Activated CD4-positive, alpha-beta memory T cell treated with anti-CD3 and anti-CD28 coated beads for 36 hours (primary cell): ENCODE measurements at regions of chr18 and their contacts with region 1.

Region 1: GRCh38 chr18:62131301-62131909 is 55.5 kb downstream of the PIGN start:
- DNase-seq: peak; percentile 67
- H3K4me3 Mint-ChIP-seq: no peak overlapping the region
- H3K27ac Mint-ChIP-seq: no peak overlapping the region
- H3K4me1 Mint-ChIP-seq: peaks cover 4% of the 10 kb centered on the region
- H3K27me3 Mint-ChIP-seq: no peaks in the 10 kb centered on the region

Region 2: DNA sequence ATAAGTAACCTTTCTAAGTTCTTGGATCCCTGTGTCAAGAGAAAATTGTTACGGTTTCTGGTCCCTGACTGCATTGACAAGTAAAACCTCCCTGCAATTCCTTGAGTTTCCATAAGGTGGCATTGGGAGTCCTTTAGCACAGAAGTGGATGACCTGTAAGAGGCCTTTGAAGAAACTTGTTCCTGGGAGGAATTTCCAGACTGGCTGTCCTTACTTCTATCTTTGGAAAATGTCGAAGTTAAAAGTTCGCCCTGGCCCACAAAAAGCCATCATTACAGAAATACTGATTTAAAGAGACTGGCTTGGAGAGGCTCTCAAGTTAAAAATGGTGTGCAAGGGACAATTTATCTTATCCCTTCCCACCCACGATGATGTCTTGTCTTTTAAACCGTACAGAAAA is 579.8 kb before region 1 on chr18:
- CTCF ChIA-PET with region 1: interaction called, 15 read pairs
- POLR2A ChIA-PET with region 1: no interaction called
- intact Hi-C with region 1: loop called (anchors 1 kb)
- DNase-seq: no peak
- H3K4me3 Mint-ChIP-seq: no peak overlapping the region
- H3K27ac Mint-ChIP-seq: no peak overlapping the region
- H3K4me1 Mint-ChIP-seq: peaks cover 9% of the 10 kb centered on the region
- H3K27me3 Mint-ChIP-seq: peaks cover 9% of the 10 kb centered on the region

Region 3: GRCh38 chr18:61581578-61582201 is 549.7 kb before region 1 on chr18:
- CTCF ChIA-PET with region 1: interaction called, 63 read pairs
- POLR2A ChIA-PET with region 1: no interaction called
- intact Hi-C with region 1: loop called (anchors 1 kb)
- DNase-seq: peak; percentile 75
- H3K4me3 Mint-ChIP-seq: no peak overlapping the region
- H3K27ac Mint-ChIP-seq: no peak overlapping the region
- H3K4me1 Mint-ChIP-seq: peaks cover 6% of the 10 kb centered on the region
- H3K27me3 Mint-ChIP-seq: peaks cover 27% of the 10 kb centered on the region

Region 4: DNA sequence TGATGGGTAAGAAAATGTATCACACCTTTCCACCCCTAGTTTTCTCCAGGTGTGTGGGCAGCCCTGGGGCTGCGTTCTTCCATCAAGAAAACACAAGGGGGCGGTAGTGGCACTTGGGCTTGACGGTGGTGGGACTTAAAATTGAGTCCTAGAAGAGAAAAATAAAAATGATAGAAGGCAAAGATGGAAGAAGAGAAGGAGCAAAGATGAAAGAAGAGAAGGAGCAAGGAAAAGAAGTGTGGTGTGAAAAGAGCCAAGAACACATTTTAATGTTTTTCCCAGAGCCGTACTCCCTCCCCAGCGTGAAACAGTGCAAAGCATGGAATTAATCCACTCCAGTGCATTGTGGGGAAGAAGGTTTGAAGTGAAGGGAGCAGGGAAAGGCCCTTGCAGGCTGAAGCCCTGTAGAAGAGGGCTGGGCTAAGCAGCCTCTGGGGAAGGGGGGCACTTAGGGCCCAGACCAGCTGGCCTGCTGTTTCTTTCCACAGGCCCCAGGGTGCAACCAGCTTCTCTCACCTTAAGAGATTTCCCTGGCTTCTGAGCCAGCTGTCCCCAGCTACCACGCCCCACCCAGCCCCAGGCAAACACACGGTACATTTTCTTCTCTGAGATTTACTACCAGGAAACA is 495.4 kb before region 1 on chr18:
- CTCF ChIA-PET with region 1: interaction called, 81 read pairs
- POLR2A ChIA-PET with region 1: no interaction called
- intact Hi-C with region 1: loop called (anchors 1 kb)
- DNase-seq: peak; percentile 54
- H3K4me3 Mint-ChIP-seq: no peak overlapping the region
- H3K27ac Mint-ChIP-seq: no peak overlapping the region
- H3K4me1 Mint-ChIP-seq: no peaks in the 10 kb centered on the region
- H3K27me3 Mint-ChIP-seq: peaks cover 2% of the 10 kb centered on the region

Region 5: DNA sequence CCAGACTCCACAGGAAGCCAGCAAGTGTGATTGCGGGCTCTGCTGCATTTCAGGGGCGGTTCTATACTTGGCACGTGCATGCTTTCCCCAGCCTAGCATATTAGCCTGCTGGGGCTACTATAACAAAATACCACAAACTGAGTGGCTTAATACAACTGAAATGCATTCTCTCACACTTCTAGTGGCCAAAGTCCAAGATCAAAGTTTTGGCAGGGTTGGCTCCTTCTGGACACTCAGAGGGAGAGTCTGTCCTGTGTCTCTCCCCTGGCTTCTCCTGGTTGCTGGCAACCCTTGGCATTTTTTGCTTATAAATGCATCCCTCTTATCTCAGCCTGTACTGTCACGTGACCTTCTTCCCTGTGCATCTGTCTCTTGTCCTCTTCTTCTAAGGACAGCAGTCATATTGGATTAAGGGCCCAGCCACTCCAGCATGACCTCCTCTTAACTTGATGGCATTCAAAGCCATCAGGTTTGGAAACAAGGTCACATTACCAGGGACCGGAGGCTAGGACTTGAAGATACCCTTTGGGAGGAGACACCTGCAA is 377.3 kb before region 1 on chr18:
- CTCF ChIA-PET with region 1: interaction called, 4 read pairs
- POLR2A ChIA-PET with region 1: no interaction called
- intact Hi-C with region 1: loop called (anchors 5 kb)
- DNase-seq: no peak
- H3K4me3 Mint-ChIP-seq: no peak overlapping the region
- H3K27ac Mint-ChIP-seq: no peak overlapping the region
- H3K4me1 Mint-ChIP-seq: peaks cover 3% of the 10 kb centered on the region
- H3K27me3 Mint-ChIP-seq: peaks cover 3% of the 10 kb centered on the region

Region 6: GRCh38 chr18:61901323-61901986 is 229.9 kb before region 1 on chr18:
- CTCF ChIA-PET with region 1: interaction called, 12 read pairs
- POLR2A ChIA-PET with region 1: no interaction called
- intact Hi-C with region 1: loop called (anchors 1 kb)
- DNase-seq: peak; percentile 43
- H3K4me3 Mint-ChIP-seq: no peak overlapping the region
- H3K27ac Mint-ChIP-seq: no peak overlapping the region
- H3K4me1 Mint-ChIP-seq: no peaks in the 10 kb centered on the region
- H3K27me3 Mint-ChIP-seq: peaks cover 22% of the 10 kb centered on the region

Region 7: GRCh38 chr18:62144338-62144737 is 12.9 kb after region 1 on chr18:
- CTCF ChIA-PET with region 1: interaction called, 16 read pairs
- POLR2A ChIA-PET with region 1: no interaction called
- intact Hi-C with region 1: no loop called
- DNase-seq: no peak
- H3K4me3 Mint-ChIP-seq: no peak overlapping the region
- H3K27ac Mint-ChIP-seq: no peak overlapping the region
- H3K4me1 Mint-ChIP-seq: no peaks in the 10 kb centered on the region
- H3K27me3 Mint-ChIP-seq: no peaks in the 10 kb centered on the region